ENCODE measurements at regions of chr6 and their contacts with region 1.

Region 1: DNA sequence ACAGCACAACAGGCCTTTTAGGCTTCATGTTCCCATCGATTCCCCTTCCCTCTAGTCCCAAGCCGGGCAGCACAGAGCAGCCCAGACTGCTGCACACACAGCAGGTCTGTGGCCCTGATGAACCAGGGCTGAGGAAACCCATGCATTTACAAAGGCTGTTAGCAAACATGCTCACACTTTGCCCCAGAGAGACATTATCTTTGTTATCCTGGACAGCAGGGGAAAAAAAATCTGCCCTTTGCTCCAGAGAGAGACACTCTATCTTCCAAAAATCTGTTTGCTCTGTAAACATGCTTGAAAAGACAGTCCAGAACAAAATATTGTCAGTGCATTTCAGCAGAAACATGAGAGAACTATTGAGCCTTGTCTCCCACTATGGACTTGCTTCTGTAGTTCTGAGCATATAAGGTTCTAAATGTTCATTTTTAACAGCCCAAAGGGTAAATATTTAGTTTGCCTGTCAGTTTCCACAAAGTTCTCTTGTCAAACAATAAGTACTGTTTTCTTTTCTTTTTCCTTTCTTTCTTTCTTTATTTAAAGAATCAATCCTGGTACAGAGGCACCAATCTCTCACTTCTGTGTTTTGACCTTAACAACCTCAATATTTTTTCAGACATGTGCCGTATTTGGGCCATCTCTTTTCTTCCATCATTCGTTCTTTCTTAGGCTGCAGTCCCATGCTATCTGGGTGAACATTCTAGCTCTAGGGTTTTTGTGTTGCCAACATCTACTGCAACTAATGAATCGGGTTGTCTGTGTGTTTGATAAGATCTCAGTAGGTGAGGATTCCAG is 468.0 kb downstream of the EPM2A start:
- DNase-seq: peak; percentile 100
- ATAC-seq: peak; percentile 99
- H3K4me3 ChIP-seq: peak overlapping the region; percentile 13 to 49 (median 43); a peak in 4 of 6 replicates
- H3K27ac ChIP-seq: peak overlapping the region; percentile 93
- H3K4me1 ChIP-seq: peaks cover 72% of the 10 kb centered on the region
- H3K27me3 ChIP-seq: no peaks in the 10 kb centered on the region
- CTCF ChIP-seq: peak; percentile 16
- EP300 ChIP-seq: peak; percentile 96 to 98
- POLR2A ChIP-seq: peak; percentile 41 to 90; a peak in 3 of 4 replicates
- RAD21 ChIP-seq: peak; percentile 69; the same call in 1 of the 2 replicates

Region 2: GRCh38 chr6:144653885-144654505 is 613.3 kb before region 1 on chr6:
- CTCF ChIA-PET with region 1: no interaction called
- POLR2A ChIA-PET with region 1: no interaction called
- in situ Hi-C with region 1: no loop called
- intact Hi-C with region 1: loop called (anchors 2 kb)
- DNase-seq: peak; percentile 91
- ATAC-seq: peak; percentile 78
- H3K4me3 ChIP-seq: peak overlapping the region in 2 of 3 experiments; percentile 1 to 36; a peak in 1 of 6 replicates
- H3K27ac ChIP-seq: peak overlapping the region; percentile 71
- H3K4me1 ChIP-seq: peaks cover 95% of the 10 kb centered on the region
- H3K27me3 ChIP-seq: no peaks in the 10 kb centered on the region
- CTCF ChIP-seq: no peak
- EP300 ChIP-seq: peak in 1 of 2 experiments; percentile 96; a peak in 2 of 4 replicates
- POLR2A ChIP-seq: no peak
- RAD21 ChIP-seq: 0 out of 2 replicates have a peak, but pooled peaks have one; percentile 13

Region 3: GRCh38 chr6:145028144-145028818 is 239.0 kb before region 1 on chr6:
- CTCF ChIA-PET with region 1: no interaction called
- POLR2A ChIA-PET with region 1: no interaction called
- in situ Hi-C with region 1: no loop called
- intact Hi-C with region 1: loop called (anchors 2 kb)
- DNase-seq: peak; percentile 11
- ATAC-seq: peak; percentile 31; the same call in 2 of the 3 replicates
- H3K4me3 ChIP-seq: no peak overlapping the region; a peak in 1 of 6 replicates
- H3K27ac ChIP-seq: no peak overlapping the region
- H3K4me1 ChIP-seq: peaks cover 45% of the 10 kb centered on the region
- H3K27me3 ChIP-seq: no peaks in the 10 kb centered on the region
- CTCF ChIP-seq: peak; percentile 65
- EP300 ChIP-seq: no peak; a peak in 1 of 4 replicates
- POLR2A ChIP-seq: no peak
- RAD21 ChIP-seq: no peak

Region 4: GRCh38 chr6:145278163-145278807 is 11.0 kb after region 1 on chr6:
- CTCF ChIA-PET with region 1: no interaction called
- POLR2A ChIA-PET with region 1: interaction called, 5 read pairs
- in situ Hi-C with region 1: no loop called
- intact Hi-C with region 1: loop called (anchors 1 kb)
- DNase-seq: peak; percentile 82
- ATAC-seq: peak; percentile 88
- H3K4me3 ChIP-seq: no peak overlapping the region
- H3K27ac ChIP-seq: peak overlapping the region; percentile 10
- H3K4me1 ChIP-seq: peaks cover 52% of the 10 kb centered on the region
- H3K27me3 ChIP-seq: no peaks in the 10 kb centered on the region
- CTCF ChIP-seq: peak; percentile 21
- EP300 ChIP-seq: peak in 1 of 2 experiments; percentile 34; a peak in 1 of 4 replicates
- POLR2A ChIP-seq: no peak
- RAD21 ChIP-seq: no peak

Region 5: DNA sequence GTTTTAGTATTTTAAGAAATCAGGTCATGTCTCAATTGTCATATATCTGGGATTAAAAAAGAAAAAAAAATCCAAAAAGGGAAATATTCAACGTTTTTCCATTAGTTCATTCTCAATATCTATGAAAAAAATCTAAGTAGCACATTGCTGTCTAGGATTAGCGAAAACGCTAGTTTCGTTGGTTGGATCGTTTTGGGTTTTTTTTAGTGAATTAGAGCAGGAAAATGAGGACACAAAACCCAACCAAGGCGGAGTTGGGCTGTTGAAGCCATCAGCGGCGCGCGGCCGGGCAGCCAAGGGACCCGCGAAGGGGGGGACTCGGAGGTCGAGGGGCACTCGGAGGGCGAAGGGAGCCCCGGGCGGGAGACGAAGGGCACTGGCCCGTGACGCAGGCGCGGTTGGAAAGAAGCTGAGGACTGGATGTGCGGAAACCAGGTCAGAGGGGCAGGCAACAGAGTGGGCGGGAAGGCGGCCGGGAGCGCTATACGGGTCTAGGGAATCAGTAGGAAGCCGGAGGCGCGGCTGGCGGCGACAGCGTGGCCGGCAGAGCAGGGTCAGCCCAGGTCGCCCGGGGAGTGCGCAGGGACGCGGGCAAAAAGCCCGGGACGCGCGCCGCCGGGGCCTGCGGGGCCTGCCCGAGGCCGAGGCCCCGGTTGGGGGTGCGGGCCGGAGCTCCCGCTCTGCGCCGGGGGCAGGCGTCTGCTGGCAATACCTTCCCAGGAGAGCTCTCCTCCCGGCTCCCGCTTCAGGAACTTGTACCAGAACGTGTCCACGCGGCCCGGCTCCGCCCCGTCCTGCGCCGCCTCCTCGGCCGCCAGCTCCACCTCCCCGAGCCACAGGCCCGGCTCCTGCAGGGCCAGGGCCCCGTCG is 467.4 kb after region 1 on chr6:
- CTCF ChIA-PET with region 1: no interaction called
- POLR2A ChIA-PET with region 1: interaction called, 4 read pairs
- in situ Hi-C with region 1: no loop called
- intact Hi-C with region 1: loop called (anchors 10 kb)
- DNase-seq: peak; percentile 94
- ATAC-seq: peak; percentile 93
- H3K4me3 ChIP-seq: peak overlapping the region; percentile 70 to 78 (median 75)
- H3K27ac ChIP-seq: peak overlapping the region; percentile 96
- H3K4me1 ChIP-seq: peaks cover 24% of the 10 kb centered on the region
- H3K27me3 ChIP-seq: no peaks in the 10 kb centered on the region
- CTCF ChIP-seq: 0 out of 2 replicates have a peak, but pooled peaks have one; percentile 20
- EP300 ChIP-seq: peak; percentile 42 to 50; a peak in 1 of 4 replicates
- POLR2A ChIP-seq: peak; percentile 79 to 93
- RAD21 ChIP-seq: peak; percentile 61